Motor neuron (in vitro differentiated cells): ENCODE measurements at regions of chr3 and their contacts with region 1.

Region 1: GRCh38 chr3:69691860-69692259 is 47.4 kb upstream of the MITF start:
- ATAC-seq: no peak
- H3K4me3 ChIP-seq: no peak overlapping the region
- H3K27ac ChIP-seq: no peak overlapping the region
- H3K4me1 ChIP-seq: no peaks in the 10 kb centered on the region

Region 2: GRCh38 chr3:69051756-69052471 is 639.9 kb before region 1 on chr3 and contains the start of gene TMF1:
- in situ Hi-C with region 1: no loop called
- ATAC-seq: peak; percentile 88 to 97 (median 95)
- H3K4me3 ChIP-seq: peak within 1 kb of the TSS; percentile 65 to 94 (median 79)
- H3K27ac ChIP-seq: peak within 1 kb of the TSS; percentile 93 to 97
- H3K4me1 ChIP-seq: peaks cover 6 to 23% of the 10 kb centered on the region in 2 donors
- total RNA-seq, gene TMF1: 24.8 to 50.5 (median 40.1) TPM

Region 3: GRCh38 chr3:69784954-69785514 is 93.2 kb after region 1 on chr3:
- in situ Hi-C with region 1: loop called in 3 of 9 experiments (anchors 5 to 25 kb)
- ATAC-seq: peak in 4 of 8 experiments; percentile 39 to 80 (median 62)
- H3K4me3 ChIP-seq: no peak overlapping the region
- H3K27ac ChIP-seq: no peak overlapping the region
- H3K4me1 ChIP-seq: no peaks in the 10 kb centered on the region